ENCODE measurements at regions of chr17 and their contacts with region 1.

Region 1: DNA sequence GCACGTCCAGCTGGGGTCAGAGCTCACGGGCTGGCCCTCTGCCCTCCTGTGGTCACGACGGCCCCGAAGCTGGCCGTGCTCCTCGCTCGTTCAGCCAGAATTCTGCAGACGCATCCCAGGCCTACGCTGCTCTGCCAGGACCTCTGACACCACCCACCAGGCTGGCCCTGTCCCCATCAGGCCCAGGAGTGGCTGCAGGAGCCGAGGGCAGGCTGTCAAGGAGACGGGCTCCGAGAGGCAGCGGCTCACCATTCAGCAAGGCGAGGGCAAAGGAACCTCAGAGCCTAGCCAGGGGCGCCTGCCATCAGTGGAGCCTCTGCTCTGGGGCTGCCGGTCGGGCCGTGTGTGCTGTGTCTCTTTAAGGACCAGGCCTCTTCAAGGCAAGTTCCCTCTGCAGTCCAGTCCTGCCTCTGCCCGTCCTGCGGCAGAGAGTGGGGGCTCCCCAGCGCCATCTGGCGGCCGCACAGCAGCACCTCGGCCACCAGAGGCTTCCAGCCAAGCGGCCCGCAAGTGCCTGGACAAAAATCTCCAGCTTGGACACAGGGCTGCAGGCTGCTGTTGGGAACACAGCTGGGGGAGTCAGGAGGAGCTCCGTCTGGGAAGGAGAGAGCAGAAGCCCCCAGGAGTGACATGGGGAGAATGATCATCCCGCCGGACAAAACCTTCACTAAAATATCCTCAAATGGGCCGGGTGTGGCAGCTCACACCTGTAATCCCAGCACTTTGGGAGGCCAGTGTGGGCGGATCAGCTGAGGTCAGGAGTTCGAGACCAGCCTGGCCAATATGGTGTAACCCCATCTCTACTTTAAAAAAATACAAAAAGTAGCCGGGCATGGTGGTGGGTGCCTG is 7.4 kb upstream of the ABR start:
- DNase-seq: peak; percentile 90
- ATAC-seq: peak; percentile 94
- H3K4me3 Mint-ChIP-seq: peak overlapping the region; percentile 30; the same call in 1 of the 2 replicates
- H3K27ac Mint-ChIP-seq: no peak overlapping the region; the same call in 1 of the 2 replicates
- H3K4me1 Mint-ChIP-seq: peaks cover 14% of the 10 kb centered on the region
- H3K27me3 Mint-ChIP-seq: peaks cover 24% of the 10 kb centered on the region
- CTCF ChIP-seq: peak; percentile 92

Region 2: DNA sequence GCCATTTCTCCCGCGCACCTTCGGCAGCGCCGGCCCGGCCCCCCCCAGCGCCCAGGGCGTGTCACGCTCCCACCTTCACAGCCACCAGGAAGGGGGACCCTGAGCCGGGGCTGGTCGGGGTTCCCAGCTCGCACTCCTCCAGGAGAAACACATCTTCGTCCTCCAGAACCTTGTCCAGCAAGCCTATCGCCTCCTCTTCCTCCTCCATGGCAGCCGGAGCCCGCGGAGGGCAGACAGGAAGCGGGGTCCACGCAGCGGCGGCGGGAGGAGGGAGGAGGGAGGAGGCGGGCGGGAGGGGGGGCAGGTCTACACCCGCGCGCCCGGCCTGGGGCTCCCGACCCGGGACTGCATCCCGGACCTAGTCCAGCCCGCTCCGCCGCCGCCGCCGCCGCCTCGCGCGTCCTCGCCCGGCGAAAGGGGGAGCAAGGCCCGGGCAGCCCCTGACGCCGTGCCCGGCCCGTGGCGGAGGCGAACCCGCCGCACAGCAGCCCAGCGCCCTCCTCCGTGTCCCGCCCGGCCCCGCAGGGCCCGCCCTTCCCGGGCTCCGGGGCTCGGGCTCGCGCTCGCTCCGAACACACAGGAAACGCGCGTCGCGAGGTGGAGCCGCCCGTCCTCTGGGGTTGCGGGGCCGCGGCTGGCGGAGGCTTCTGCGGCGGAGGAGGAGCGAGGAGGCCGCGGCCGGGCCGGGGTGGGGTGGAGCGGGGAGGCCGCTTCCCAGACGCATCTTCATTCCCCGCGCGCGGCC is 78.1 kb before region 1 on chr17:
- CTCF ChIA-PET with region 1: interaction called, 20 read pairs
- POLR2A ChIA-PET with region 1: no interaction called
- DNase-seq: peak; percentile 38
- ATAC-seq: peak; percentile 11
- H3K4me3 Mint-ChIP-seq: peak overlapping the region; percentile 72
- H3K27ac Mint-ChIP-seq: no peak overlapping the region
- H3K4me1 Mint-ChIP-seq: peaks cover 32% of the 10 kb centered on the region
- H3K27me3 Mint-ChIP-seq: peaks cover 12% of the 10 kb centered on the region
- CTCF ChIP-seq: no peak

Region 3: DNA sequence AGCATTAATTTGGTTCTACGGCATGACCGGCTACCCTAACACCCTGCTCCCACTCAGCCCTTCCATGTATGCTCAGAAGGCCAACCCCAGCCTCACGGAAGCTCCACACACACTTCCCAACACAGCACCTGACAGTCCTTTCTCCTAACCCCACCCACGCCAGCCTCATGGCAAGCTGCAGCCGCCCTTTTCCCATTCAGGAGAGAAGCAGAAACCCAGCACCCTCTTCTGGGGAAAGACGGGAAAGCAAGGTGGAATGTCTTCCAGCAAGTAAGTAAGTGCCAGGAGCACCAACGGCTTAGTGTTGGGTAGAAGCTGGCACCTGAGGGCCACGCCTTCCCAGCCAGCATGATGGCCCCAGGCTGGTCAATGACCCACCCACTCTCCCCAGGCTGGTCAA is 39.5 kb before region 1 on chr17:
- CTCF ChIA-PET with region 1: interaction called, 15 read pairs
- POLR2A ChIA-PET with region 1: no interaction called
- DNase-seq: peak; percentile 83
- ATAC-seq: peak; percentile 91
- H3K4me3 Mint-ChIP-seq: no peak overlapping the region
- H3K27ac Mint-ChIP-seq: no peak overlapping the region; the same call in 1 of the 2 replicates
- H3K4me1 Mint-ChIP-seq: peaks cover 2% of the 10 kb centered on the region; the same call in 1 of the 2 replicates
- H3K27me3 Mint-ChIP-seq: no peaks in the 10 kb centered on the region
- CTCF ChIP-seq: 0 out of 2 replicates have a peak, but pooled peaks have one; percentile 27

Region 4: GRCh38 chr17:1170739-1171138 is 16.4 kb before region 1 on chr17:
- CTCF ChIA-PET with region 1: interaction called, 21 read pairs
- POLR2A ChIA-PET with region 1: interaction called, 5 read pairs
- DNase-seq: peak; percentile 54
- ATAC-seq: peak; percentile 64
- H3K4me3 Mint-ChIP-seq: no peak overlapping the region
- H3K27ac Mint-ChIP-seq: no peak overlapping the region; the same call in 1 of the 2 replicates
- H3K4me1 Mint-ChIP-seq: no peaks in the 10 kb centered on the region
- H3K27me3 Mint-ChIP-seq: no peaks in the 10 kb centered on the region
- CTCF ChIP-seq: peak; percentile 72

Region 5: GRCh38 chr17:1229432-1229899 is 42.3 kb after region 1 on chr17:
- CTCF ChIA-PET with region 1: interaction called, 17 read pairs
- POLR2A ChIA-PET with region 1: no interaction called
- DNase-seq: peak; percentile 31
- ATAC-seq: peak; percentile 49
- H3K4me3 Mint-ChIP-seq: peak overlapping the region; percentile 34
- H3K27ac Mint-ChIP-seq: no peak overlapping the region
- H3K4me1 Mint-ChIP-seq: peaks cover 8% of the 10 kb centered on the region
- H3K27me3 Mint-ChIP-seq: peaks cover 77% of the 10 kb centered on the region
- CTCF ChIP-seq: no peak

Region 6: DNA sequence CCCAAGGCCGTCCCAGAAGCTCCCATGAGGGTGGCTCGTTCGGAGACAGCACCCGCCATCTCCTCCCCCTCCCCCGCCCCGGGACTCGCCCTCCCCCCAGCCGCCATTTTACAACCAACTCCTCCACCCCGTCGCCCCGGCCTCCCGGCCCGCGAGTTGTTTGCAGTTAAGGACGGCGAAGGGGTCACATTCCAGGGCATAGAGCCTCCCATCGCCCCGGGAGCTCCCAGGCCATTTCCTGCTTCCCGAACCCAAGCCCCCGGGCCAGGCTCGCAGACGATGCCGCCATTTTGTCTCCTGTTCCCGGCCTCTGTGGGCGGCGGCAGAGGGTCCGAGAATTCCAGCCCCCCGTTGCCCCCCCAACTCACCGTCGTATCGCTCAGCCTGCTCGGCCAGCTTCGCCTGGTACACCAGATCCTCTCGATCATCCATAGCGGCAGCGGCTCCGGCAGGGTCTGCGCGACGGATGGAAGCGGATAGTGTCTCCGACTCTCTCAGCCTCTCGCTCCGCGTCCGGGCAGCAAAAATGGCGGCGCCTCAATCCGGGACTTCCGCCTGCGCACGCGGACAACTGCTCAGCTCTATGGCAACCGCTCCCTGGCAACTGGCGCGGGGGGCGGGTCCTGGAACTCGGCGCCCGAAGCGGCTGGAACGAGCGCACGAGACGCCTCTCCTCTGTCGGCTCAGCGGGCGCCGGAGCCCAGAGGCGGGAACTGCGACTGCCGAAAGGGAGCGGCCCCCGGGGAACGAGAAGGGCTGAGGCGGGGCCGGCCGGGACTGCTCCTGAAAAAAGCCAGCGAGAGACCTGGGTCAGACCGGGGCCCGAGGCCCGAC is 212.7 kb after region 1 on chr17 and contains the start of gene YWHAE:
- CTCF ChIA-PET with region 1: no interaction called
- POLR2A ChIA-PET with region 1: no interaction called
- DNase-seq: peak; percentile 99
- ATAC-seq: peak; percentile 92
- H3K4me3 Mint-ChIP-seq: peak within 1 kb of the TSS; percentile 99
- H3K27ac Mint-ChIP-seq: peak within 1 kb of the TSS; percentile 99
- H3K4me1 Mint-ChIP-seq: peaks cover 28% of the 10 kb centered on the region
- H3K27me3 Mint-ChIP-seq: no peaks in the 10 kb centered on the region; the same call in 1 of the 2 replicates
- CTCF ChIP-seq: no peak
- total RNA-seq, gene YWHAE: 1,033 to 1,180 TPM (median 1,148 TPM) in 3 replicates

Measured in WTC11 (cell line).